H1 (cell line): ENCODE measurements at regions of chr16 and their contacts with region 1.

Region 1: GRCh38 chr16:53054670-53055485 is at the start of gene CHD9:
- DNase-seq: peak in 1 of 2 experiments; percentile 87
- H3K4me3 ChIP-seq: peak within 1 kb of the TSS; percentile 34 to 68 (median 60)
- H3K27ac ChIP-seq: peak within 1 kb of the TSS; percentile 39; the same call in 1 of the 2 replicates
- H3K4me1 ChIP-seq: peaks cover 6 to 9% (median 8%) of the 10 kb centered on the region in 4 experiments; a peak in 5 of 7 replicates
- H3K27me3 ChIP-seq: no peaks in the 10 kb centered on the region; a peak in 1 of 7 replicates
- CTCF ChIP-seq: peak; percentile 95 to 97 (median 97)
- EP300 ChIP-seq: no peak
- POLR2A ChIP-seq: peak in 1 of 2 experiments; percentile 44; a peak in 2 of 3 replicates
- RAD21 ChIP-seq: peak; percentile 95 to 96
- total RNA-seq, gene CHD9: 27.5 and 32.4 TPM in 2 replicates

Region 2: DNA sequence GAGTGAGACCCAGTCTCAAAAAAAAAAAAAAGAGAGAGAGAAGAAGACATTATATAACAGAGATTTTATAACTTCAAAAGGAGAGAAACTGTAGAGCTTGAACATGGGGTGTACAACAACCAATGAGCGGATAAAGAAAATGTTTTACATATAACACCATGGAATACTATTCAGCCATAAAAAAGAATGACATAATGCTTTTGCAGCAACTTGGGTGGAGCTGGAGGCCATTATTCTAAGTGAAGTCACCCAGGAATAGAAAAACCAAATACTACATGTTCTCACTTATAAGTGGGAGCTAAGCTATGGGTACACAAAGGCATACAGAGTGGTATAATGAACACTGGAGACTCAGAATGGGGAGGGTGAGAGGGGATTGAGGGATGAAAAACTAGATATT is 63.3 kb before region 1 on chr16:
- CTCF ChIA-PET with region 1: no interaction called
- POLR2A ChIA-PET with region 1: no interaction called
- DNase-seq: no peak
- H3K4me3 ChIP-seq: no peak overlapping the region
- H3K27ac ChIP-seq: no peak overlapping the region
- H3K4me1 ChIP-seq: peaks cover 0 to 5% (median 1%) of the 10 kb centered on the region in 4 experiments; a peak in 1 of 7 replicates
- H3K27me3 ChIP-seq: no peaks in the 10 kb centered on the region
- CTCF ChIP-seq: no peak
- EP300 ChIP-seq: no peak
- POLR2A ChIP-seq: no peak
- RAD21 ChIP-seq: no peak

Region 3: GRCh38 chr16:53043986-53044601 is 10.8 kb before region 1 on chr16:
- CTCF ChIA-PET with region 1: interaction called, 11 read pairs
- POLR2A ChIA-PET with region 1: interaction called, 21 read pairs
- DNase-seq: peak; percentile 92 to 98
- H3K4me3 ChIP-seq: peak overlapping the region; percentile 53 to 69 (median 63)
- H3K27ac ChIP-seq: peak overlapping the region; percentile 77
- H3K4me1 ChIP-seq: peaks cover 2 to 27% (median 21%) of the 10 kb centered on the region in 4 experiments; a peak in 6 of 7 replicates
- H3K27me3 ChIP-seq: no peaks in the 10 kb centered on the region
- CTCF ChIP-seq: no peak
- EP300 ChIP-seq: peak; percentile 48 to 91
- POLR2A ChIP-seq: peak; percentile 92 to 97
- RAD21 ChIP-seq: 0 out of 4 replicates have a peak, but pooled peaks of 1 of the 2 experiments have one; percentile 11

Region 4: GRCh38 chr16:53068423-53068833 is 13.6 kb after region 1 on chr16:
- CTCF ChIA-PET with region 1: interaction called, 21 read pairs
- POLR2A ChIA-PET with region 1: interaction called, 5 read pairs
- DNase-seq: no peak
- H3K4me3 ChIP-seq: no peak overlapping the region
- H3K27ac ChIP-seq: 0 out of 2 replicates have a peak overlapping the region, but pooled peaks have one; percentile 8
- H3K4me1 ChIP-seq: peaks cover 0 to 8% (median 3%) of the 10 kb centered on the region in 4 experiments; a peak in 3 of 7 replicates
- H3K27me3 ChIP-seq: no peaks in the 10 kb centered on the region
- CTCF ChIP-seq: no peak
- EP300 ChIP-seq: no peak
- POLR2A ChIP-seq: no peak
- RAD21 ChIP-seq: no peak

Region 5: DNA sequence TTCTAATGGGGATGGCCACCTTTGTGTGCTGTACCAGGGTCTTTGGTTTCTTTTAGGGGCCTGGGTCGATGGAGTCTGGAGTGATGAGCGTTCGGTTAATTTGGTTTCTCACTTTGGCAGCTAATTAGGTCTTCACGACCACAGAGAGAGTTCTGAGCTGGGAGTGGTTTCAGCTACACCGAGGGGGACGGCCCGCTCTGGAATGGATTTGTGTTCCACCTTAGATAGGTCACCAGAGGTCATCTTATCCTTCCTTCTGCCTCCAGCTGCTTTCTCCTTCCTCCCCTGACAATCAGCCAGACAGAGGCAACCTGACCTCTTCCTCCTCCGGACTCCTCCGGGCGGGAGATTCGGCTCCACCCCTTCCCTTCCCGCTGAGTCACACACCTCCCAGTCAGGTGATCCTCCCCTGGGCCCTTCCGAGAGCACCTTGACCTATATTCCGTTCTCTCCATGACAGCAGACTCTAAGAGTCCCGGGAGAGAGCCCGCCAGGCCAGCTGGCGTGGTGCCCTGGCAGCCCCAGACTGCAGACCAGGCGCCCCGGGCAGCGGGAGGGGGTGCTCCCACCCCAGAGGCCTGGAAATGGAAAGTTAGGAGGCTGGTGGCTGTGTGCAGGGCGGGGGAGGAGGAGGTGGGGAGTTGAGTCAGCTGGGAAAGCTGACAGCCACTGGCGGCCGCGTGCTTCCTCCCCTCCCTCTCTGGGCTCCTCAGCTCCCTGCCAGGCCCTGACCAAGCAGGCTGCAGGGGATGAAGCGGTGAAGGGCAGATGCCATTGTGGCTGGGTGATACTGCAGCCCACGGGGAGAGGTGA is 44.6 kb after region 1 on chr16:
- CTCF ChIA-PET with region 1: interaction called, 12 read pairs
- POLR2A ChIA-PET with region 1: interaction called, 14 read pairs
- DNase-seq: peak; percentile 88 to 93
- H3K4me3 ChIP-seq: peak overlapping the region; percentile 31 to 64 (median 40)
- H3K27ac ChIP-seq: peak overlapping the region; percentile 24; the same call in 1 of the 2 replicates
- H3K4me1 ChIP-seq: peaks cover 5 to 12% (median 9%) of the 10 kb centered on the region in 4 experiments
- H3K27me3 ChIP-seq: no peaks in the 10 kb centered on the region
- CTCF ChIP-seq: no peak
- EP300 ChIP-seq: 0 out of 3 replicates have a peak, but pooled peaks of 1 of the 2 experiments have one; percentile 41
- POLR2A ChIP-seq: no peak; a peak in 1 of 3 replicates
- RAD21 ChIP-seq: no peak; a peak in 1 of 4 replicates

Region 6: GRCh38 chr16:53130159-53131049 is 75.5 kb after region 1 on chr16:
- CTCF ChIA-PET with region 1: interaction called, 18 read pairs
- POLR2A ChIA-PET with region 1: interaction called, 7 read pairs
- DNase-seq: peak; percentile 77 to 93
- H3K4me3 ChIP-seq: peak overlapping the region; percentile 68 to 89 (median 76)
- H3K27ac ChIP-seq: peak overlapping the region; percentile 93
- H3K4me1 ChIP-seq: peaks cover 2 to 6% (median 4%) of the 10 kb centered on the region in 4 experiments; a peak in 2 of 7 replicates
- H3K27me3 ChIP-seq: no peaks in the 10 kb centered on the region
- CTCF ChIP-seq: peak; percentile 57 to 79 (median 73)
- EP300 ChIP-seq: 0 out of 3 replicates have a peak, but pooled peaks of 1 of the 2 experiments have one; percentile 8
- POLR2A ChIP-seq: peak; percentile 20 to 30; a peak in 2 of 3 replicates
- RAD21 ChIP-seq: peak; percentile 62 to 78

Region 7: DNA sequence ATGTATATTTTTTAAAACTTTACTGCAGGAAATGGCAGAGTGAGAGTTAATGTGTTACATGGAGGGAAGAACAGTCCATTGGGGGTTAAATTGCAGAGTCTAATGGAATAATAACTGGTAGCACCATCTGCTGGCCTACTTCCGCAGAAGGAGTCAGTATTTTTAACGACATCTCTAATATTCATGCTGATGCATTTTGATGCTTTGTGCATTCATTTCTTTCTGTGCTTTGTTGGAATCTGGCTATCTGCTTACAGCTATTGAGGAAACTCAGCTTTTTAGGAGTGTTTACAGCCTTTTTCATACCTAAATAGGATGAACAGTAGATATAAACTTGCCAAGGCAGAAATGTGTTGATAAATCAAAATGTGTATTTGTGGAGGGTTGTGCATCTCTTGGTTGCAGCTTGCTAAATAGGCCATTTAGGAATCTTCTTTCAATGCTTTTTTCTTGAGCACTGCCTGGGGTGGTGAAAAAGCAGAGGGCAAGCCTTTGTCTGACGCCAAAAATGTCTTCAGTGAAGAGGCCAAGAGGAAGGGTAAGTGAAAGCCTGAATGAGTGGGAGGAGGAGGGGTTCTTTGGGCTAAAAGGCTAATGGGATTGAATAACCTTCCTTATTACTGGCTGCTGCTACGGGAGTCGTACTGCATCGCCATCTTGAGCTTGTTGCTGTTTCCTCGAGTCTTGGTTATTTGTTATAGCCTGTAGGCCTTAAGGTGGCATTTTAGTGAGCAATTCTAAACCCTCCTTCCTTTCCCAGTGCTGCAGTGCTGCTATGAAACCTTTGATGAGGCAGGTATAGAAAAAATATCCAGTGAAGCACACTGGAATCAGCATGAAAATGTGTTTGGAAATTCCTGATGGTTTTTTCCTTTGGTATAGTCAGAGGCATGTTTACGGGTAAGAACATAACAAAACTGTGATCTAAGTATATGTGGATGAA is 153.2 kb after region 1 on chr16:
- CTCF ChIA-PET with region 1: interaction called, 6 read pairs
- POLR2A ChIA-PET with region 1: interaction called, 16 read pairs
- DNase-seq: peak; percentile 31 to 53
- H3K4me3 ChIP-seq: peak overlapping the region; percentile 50 to 79 (median 54)
- H3K27ac ChIP-seq: peak overlapping the region; percentile 96
- H3K4me1 ChIP-seq: peaks cover 0 to 10% (median 0%) of the 10 kb centered on the region in 4 experiments; a peak in 1 of 7 replicates
- H3K27me3 ChIP-seq: no peaks in the 10 kb centered on the region
- CTCF ChIP-seq: peak in 2 of 3 experiments; percentile 25 to 56; a peak in 2 of 4 replicates
- EP300 ChIP-seq: peak in 1 of 2 experiments; percentile 39; a peak in 1 of 3 replicates
- POLR2A ChIP-seq: peak; percentile 95 to 99
- RAD21 ChIP-seq: peak; percentile 43 to 56